ENCODE measurements at regions of chr10 and their contacts with region 1.

Region 1: GRCh38 chr10:133520155-133520738 is 6.9 kb upstream of the CYP2E1 start:
- DNase-seq: peak; percentile 80
- H3K4me3 Mint-ChIP-seq: peak overlapping the region; percentile 42
- H3K27ac Mint-ChIP-seq: no peak overlapping the region
- H3K4me1 Mint-ChIP-seq: peaks cover 14% of the 10 kb centered on the region
- H3K27me3 Mint-ChIP-seq: peaks cover 34% of the 10 kb centered on the region

Region 2: GRCh38 chr10:132788180-132788830 is 731.9 kb before region 1 on chr10:
- intact Hi-C with region 1: loop called (anchors 10 kb)
- DNase-seq: no peak
- H3K4me3 Mint-ChIP-seq: no peak overlapping the region
- H3K27ac Mint-ChIP-seq: no peak overlapping the region
- H3K4me1 Mint-ChIP-seq: no peaks in the 10 kb centered on the region
- H3K27me3 Mint-ChIP-seq: peaks cover 17% of the 10 kb centered on the region

Region 3: DNA sequence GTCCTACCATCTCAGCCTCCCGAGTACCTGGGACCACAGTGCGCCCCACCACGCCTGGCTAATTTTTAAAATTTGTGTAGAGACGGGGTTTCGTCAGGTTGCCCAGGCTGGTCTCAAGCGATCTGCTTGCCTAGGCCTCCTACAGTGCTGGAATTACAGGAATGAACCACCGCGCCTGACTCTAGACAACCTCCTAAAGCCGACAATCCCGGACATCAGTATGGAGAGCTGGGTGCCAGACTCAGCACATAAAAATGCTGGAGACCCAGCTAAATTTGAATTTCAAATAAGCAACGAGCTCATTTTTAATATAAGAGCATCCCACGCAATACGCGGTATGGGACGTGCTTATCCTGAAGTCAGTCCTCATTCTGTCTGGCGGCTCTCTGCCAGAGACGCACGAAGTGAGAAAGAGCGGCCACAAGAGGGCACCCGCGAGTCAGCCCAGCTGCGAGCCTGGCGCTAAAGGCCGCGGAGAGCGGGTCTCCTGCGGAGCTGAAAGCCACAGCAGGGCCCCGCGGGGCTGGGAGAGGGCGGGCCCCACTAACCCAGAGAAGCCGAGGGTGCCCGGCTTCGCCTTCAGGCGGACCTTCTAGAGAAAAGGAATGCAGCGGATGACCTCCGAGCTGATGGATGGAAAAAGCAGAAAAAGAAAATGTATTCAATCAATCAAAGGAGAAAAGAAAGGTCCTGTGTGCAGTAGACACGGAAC is 190.6 kb before region 1 on chr10:
- intact Hi-C with region 1: loop called (anchors 5 kb)
- DNase-seq: peak; percentile 76
- H3K4me3 Mint-ChIP-seq: peak overlapping the region; percentile 60
- H3K27ac Mint-ChIP-seq: no peak overlapping the region
- H3K4me1 Mint-ChIP-seq: no peaks in the 10 kb centered on the region
- H3K27me3 Mint-ChIP-seq: peaks cover 63% of the 10 kb centered on the region

Region 4: DNA sequence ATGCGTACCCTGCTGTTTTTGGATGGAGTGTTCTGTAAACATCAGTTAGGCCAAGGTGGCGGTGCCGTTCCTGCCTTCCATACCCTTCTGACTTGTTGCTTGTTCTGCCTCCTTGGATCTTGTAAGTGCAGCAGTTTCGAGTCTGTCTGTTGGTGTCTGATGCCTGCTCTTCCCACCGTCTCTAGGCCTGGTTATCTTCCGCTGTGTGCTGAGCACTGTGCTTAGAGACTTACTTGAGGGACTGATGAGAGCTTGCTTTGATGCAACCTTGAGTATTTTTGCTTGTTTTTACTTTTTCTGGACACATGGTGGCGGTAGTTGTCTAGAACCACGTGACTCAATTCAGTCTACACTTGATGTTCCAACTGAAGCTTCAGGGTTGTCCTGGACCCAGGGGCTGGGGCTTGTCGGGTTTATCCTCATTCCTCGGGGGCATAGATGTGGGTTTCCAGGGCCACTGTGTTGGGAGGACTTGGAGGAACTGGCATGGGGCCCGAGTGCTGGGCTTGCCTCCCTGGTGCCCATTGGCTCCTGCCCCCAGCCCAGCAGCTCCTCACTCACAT is 81.5 kb before region 1 on chr10:
- intact Hi-C with region 1: loop called (anchors 1 kb)
- DNase-seq: no peak
- H3K4me3 Mint-ChIP-seq: no peak overlapping the region
- H3K27ac Mint-ChIP-seq: no peak overlapping the region
- H3K4me1 Mint-ChIP-seq: peaks cover 11% of the 10 kb centered on the region
- H3K27me3 Mint-ChIP-seq: peaks cover 13% of the 10 kb centered on the region

Region 5: GRCh38 chr10:133489816-133490588 is 30.2 kb before region 1 on chr10:
- intact Hi-C with region 1: no loop called
- DNase-seq: no peak
- H3K4me3 Mint-ChIP-seq: no peak overlapping the region
- H3K27ac Mint-ChIP-seq: peak overlapping the region; percentile 46
- H3K4me1 Mint-ChIP-seq: peaks cover 13% of the 10 kb centered on the region
- H3K27me3 Mint-ChIP-seq: peaks cover 15% of the 10 kb centered on the region